ENCODE measurements at regions of chr2 and their contacts with region 1.

Region 1: GRCh38 chr2:106638043-106638442 is 150.9 kb downstream of the CD8B2 start:
- DNase-seq: no peak
- ATAC-seq: peak in 1 of 8 donors; percentile 31
- H3K4me3 ChIP-seq: no peak overlapping the region
- H3K27ac ChIP-seq: no peak overlapping the region
- H3K4me1 ChIP-seq: no peaks in the 10 kb centered on the region
- H3K27me3 ChIP-seq: no peaks in the 10 kb centered on the region
- CTCF ChIP-seq: peak in 7 of 9 donors; percentile 30 to 66 (median 53)

Region 2: GRCh38 chr2:107669335-107669734 is 1031.3 kb after region 1 on chr2:
- intact Hi-C with region 1: loop called in 4 of 10 experiments (anchors 5 to 10 kb)
- DNase-seq: no peak
- ATAC-seq: no peak
- H3K4me3 ChIP-seq: no peak overlapping the region
- H3K27ac ChIP-seq: no peak overlapping the region
- H3K4me1 ChIP-seq: no peaks in the 10 kb centered on the region
- H3K27me3 ChIP-seq: no peaks in the 10 kb centered on the region
- CTCF ChIP-seq: peak in 6 of 9 donors; percentile 33 to 54 (median 39)

Region 3: GRCh38 chr2:107936433-107937359 is 1298.7 kb after region 1 on chr2:
- intact Hi-C with region 1: loop called in 6 of 10 experiments (anchors 5 to 10 kb)
- DNase-seq: no peak
- ATAC-seq: no peak
- H3K4me3 ChIP-seq: no peak overlapping the region
- H3K27ac ChIP-seq: no peak overlapping the region
- H3K4me1 ChIP-seq: no peaks in the 10 kb centered on the region
- H3K27me3 ChIP-seq: peaks cover 0 to 13% (median 0%) of the 10 kb centered on the region in 7 donors
- CTCF ChIP-seq: peak; percentile 24 to 56 (median 45)

Region 4: DNA sequence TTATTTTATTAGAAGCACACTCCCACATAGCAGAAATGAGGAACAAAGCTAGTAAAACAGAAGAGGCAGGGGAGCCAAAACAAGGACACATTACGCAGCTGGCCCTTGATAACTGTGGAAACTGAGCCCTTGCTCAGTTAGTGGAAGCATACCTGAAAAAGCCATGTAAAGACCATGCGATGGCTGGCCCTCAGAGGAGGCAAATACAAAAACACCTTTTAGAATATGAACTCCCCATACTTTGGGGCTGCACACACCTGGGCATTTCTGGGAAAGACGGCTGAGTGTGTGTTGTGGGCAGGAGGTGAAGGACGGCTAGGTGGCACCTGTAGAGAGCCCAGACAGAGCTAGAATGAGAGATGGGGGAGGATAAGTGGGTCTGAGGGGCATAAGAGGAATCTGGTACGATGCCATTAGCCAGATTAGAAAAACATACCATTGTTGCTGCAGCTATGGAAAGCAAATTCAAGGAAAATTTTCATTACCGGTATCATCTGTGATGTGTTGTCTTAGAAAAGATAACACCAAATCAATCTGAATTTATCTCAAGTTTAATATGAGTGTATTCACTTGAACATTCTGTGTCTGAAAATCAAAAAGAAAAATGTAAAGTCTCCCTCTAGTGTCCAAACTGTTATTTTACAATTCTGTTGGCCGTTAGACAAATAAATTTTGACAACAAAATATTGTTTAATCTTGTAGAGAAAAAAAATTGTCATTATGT is 1556.5 kb after region 1 on chr2:
- intact Hi-C with region 1: loop called in 1 of 10 experiments (anchors 10 kb)
- DNase-seq: no peak
- ATAC-seq: no peak
- H3K4me3 ChIP-seq: no peak overlapping the region
- H3K27ac ChIP-seq: no peak overlapping the region
- H3K4me1 ChIP-seq: no peaks in the 10 kb centered on the region
- H3K27me3 ChIP-seq: peaks cover 0 to 9% (median 0%) of the 10 kb centered on the region in 7 donors
- CTCF ChIP-seq: peak in 8 of 9 donors; percentile 8 to 71 (median 52)